Activated CD4-positive, alpha-beta T cell treated with anti-CD3 and anti-CD28 coated beads, Interleukin-2, amount 10 ng/mL, durations not matched to agents 24 days and 14 days (primary cell): ENCODE measurements at regions of chr10 and their contacts with region 1.

Region 1: DNA sequence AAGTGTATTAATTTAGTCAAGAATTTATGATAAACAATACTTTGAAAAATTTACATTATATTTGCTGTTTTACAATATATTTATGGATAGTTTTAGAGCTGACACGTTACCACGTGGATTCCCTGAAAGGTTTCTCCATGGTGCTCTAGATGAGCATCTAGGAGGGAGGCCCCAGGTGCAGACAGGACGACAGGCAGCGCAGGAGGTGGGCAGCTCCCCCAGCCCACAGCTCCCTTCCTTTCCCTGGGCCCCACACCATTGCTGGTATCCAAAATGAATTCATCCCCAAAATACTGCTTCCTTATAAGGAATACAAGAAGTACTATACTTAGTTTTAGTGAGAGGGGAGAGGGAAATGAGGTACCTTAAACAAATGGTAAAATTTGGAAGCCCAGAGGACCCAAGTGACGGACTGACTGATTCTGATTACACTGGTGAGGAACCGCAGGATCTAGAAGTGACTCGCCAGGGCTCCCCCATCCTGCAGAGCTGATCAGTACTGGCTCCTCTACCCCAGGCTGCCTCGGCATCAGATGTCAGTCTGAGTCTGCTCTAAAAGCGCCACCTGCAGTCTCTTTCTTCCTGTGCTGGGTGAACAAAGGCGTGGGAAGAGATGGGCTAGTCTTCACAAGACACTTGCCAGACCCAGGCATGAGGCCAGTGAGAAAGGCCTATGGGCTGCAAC is 89.2 kb downstream of the DLG5 start:
- DNase-seq: peak; percentile 90
- H3K4me3 Mint-ChIP-seq: no peak overlapping the region
- H3K27ac Mint-ChIP-seq: peak overlapping the region; percentile 67
- H3K4me1 Mint-ChIP-seq: peaks cover 15% of the 10 kb centered on the region
- H3K27me3 Mint-ChIP-seq: no peaks in the 10 kb centered on the region

Region 2: DNA sequence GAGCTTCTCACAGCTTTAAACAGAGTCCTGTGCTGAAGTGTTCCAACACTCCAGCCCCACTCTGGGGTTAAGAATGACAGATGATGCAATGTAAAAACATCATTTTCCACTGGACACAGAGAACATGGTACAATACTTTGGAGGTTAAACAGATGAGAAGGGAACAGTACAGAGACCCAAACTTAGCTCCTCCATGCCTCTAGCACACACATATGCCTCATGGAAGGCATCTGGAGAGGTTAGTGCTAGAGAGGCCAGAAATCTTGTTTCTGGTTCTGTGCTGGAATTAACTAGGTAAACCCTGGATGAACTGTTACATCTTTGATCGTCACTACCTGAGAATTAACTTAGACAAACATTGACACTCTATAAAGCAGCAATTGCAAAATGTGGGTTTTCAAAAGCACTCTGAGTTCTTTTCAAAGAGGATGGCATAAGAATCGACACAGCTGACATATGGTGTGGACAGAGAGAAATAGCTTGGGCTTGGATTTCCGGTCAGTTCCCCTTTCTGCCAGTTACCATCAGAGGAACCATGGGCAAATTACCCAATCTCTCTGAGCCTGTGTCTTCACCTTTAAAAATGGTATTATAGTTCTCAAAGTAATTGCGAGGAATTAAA is 281.7 kb before region 1 on chr10:
- intact Hi-C with region 1: no loop called
- DNase-seq: no peak
- H3K4me3 Mint-ChIP-seq: no peak overlapping the region
- H3K27ac Mint-ChIP-seq: no peak overlapping the region
- H3K4me1 Mint-ChIP-seq: peaks cover 2% of the 10 kb centered on the region
- H3K27me3 Mint-ChIP-seq: no peaks in the 10 kb centered on the region

Region 3: DNA sequence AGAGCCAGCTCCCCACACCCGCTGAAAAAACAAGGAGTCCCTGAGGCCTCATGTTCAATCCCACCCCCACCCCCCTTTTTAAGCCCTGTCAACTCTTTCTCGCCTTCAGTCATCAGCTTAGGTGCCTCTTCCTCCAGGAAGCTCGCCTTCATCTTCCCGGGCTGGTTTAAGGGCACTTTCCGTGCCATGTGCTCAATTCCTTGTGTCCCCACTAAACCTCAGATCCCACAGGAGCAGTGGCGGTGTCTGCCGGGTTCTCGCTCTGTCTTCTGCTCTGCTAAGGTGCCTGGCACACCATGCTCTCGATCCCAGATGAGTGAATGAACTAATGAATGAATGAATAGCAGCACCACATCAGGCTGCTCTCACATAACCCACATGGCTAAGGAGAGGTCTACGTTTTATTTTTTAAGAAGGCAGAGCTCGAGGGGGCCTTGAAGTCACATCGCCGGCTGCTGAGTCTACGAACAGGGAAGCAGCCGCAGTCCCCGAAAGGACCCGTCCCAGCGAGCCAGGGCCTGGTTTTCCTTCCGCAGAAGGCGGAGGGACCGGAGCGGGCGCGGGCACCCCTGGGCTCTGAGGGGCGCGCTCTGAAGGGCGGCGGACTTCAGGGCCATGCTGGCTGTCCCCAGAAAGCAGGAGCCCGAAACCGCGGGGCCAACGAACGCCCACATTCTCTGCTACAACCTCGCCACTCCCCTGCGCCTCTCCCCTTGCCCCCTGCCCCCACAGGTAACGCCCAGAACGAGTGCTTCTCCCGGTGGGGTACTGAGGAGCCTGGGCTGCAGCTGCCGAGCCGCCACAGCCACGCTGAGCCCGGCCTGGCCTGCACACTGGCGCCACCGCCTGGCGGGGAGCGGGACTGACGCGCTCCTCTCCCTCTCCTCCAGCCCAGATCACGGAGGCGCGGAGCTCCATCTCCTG is 126.4 kb before region 1 on chr10:
- intact Hi-C with region 1: loop called (anchors 1 kb)
- DNase-seq: peak; percentile 93
- H3K4me3 Mint-ChIP-seq: peak overlapping the region; percentile 61
- H3K27ac Mint-ChIP-seq: no peak overlapping the region
- H3K4me1 Mint-ChIP-seq: peaks cover 5% of the 10 kb centered on the region
- H3K27me3 Mint-ChIP-seq: peaks cover 34% of the 10 kb centered on the region

Region 4: DNA sequence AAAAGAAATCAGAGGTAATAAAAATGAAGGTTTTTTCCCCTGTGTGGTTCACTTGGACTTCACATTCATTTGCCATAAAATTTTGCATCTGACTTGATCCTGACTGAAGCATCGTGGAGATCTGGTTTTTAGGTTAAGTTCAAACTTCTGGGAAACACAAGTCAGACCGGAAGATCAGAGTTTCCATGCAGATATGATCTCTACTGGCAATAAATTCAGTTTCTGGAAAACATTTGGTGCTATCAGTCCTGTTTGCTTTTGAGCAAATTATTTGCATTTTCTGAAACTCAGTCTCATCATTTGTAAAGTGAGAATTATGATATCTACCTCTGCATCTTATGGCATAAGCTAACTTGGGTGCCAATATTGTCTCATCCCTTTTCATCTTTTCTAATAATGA is 118.4 kb before region 1 on chr10:
- intact Hi-C with region 1: loop called (anchors 1 kb)
- DNase-seq: no peak
- H3K4me3 Mint-ChIP-seq: no peak overlapping the region
- H3K27ac Mint-ChIP-seq: no peak overlapping the region
- H3K4me1 Mint-ChIP-seq: no peaks in the 10 kb centered on the region
- H3K27me3 Mint-ChIP-seq: peaks cover 12% of the 10 kb centered on the region

Region 5: GRCh38 chr10:77801474-77802161 is 35.8 kb before region 1 on chr10:
- intact Hi-C with region 1: loop called (anchors 1 kb)
- DNase-seq: peak; percentile 86
- H3K4me3 Mint-ChIP-seq: peak overlapping the region; percentile 59
- H3K27ac Mint-ChIP-seq: peak overlapping the region; percentile 81
- H3K4me1 Mint-ChIP-seq: peaks cover 28% of the 10 kb centered on the region
- H3K27me3 Mint-ChIP-seq: no peaks in the 10 kb centered on the region

Region 6: GRCh38 chr10:78029269-78030226 is 192.2 kb after region 1 on chr10 and contains the start of gene POLR3A:
- intact Hi-C with region 1: loop called (anchors 5 kb)
- DNase-seq: peak; percentile 97
- H3K4me3 Mint-ChIP-seq: peak within 1 kb of the TSS; percentile 99
- H3K27ac Mint-ChIP-seq: peak within 1 kb of the TSS; percentile 95
- H3K4me1 Mint-ChIP-seq: peaks cover 24% of the 10 kb centered on the region
- H3K27me3 Mint-ChIP-seq: no peaks in the 10 kb centered on the region
- total RNA-seq, gene POLR3A: 27.8 and 28.7 TPM in 2 replicates